ENCODE measurements at regions of chr19 and their contacts with region 1.

Region 1: GRCh38 chr19:37466798-37467607 is at the start of gene ZNF569:
- DNase-seq: peak; percentile 68 to 95 (median 92)
- ATAC-seq: peak; percentile 79
- H3K4me3 ChIP-seq: peak within 1 kb of the TSS; percentile 79
- H3K4me3 Mint-ChIP-seq: peak within 1 kb of the TSS; percentile 91 to 100 (median 95)
- H3K27ac ChIP-seq: peak within 1 kb of the TSS; percentile 96
- H3K27ac Mint-ChIP-seq: peak within 1 kb of the TSS; percentile 93 to 100 (median 98)
- H3K4me1 ChIP-seq: peaks cover 13 to 16% of the 10 kb centered on the region in 2 donors
- H3K4me1 Mint-ChIP-seq: peaks cover 26 to 54% (median 45%) of the 10 kb centered on the region in 7 donors
- H3K27me3 ChIP-seq: no peaks in the 10 kb centered on the region
- H3K27me3 Mint-ChIP-seq: no peaks in the 10 kb centered on the region
- total RNA-seq, gene ZNF569: 4.1 to 16.4 (median 8.5) TPM

Region 2: GRCh38 chr19:36214386-36215275 is 1252.4 kb before region 1 on chr19 and contains the starts of genes ZNF146 and ZNF565:
- CTCF ChIA-PET with region 1: no interaction called
- POLR2A ChIA-PET with region 1: interaction called, 6 read pairs
- intact Hi-C with region 1: loop called (anchors 1 kb)
- DNase-seq: peak; percentile 87 to 97 (median 96)
- ATAC-seq: peak; percentile 94
- H3K4me3 ChIP-seq: peak within 1 kb of the TSS; percentile 97
- H3K4me3 Mint-ChIP-seq: no peak within 1 kb of the TSS
- H3K27ac ChIP-seq: peak within 1 kb of the TSS; percentile 94
- H3K27ac Mint-ChIP-seq: peak within 1 kb of the TSS in 2 of 9 donors; percentile 38 to 41
- H3K4me1 ChIP-seq: peaks cover 14 to 19% of the 10 kb centered on the region in 2 donors
- H3K4me1 Mint-ChIP-seq: peaks cover 13 to 28% (median 25%) of the 10 kb centered on the region in 7 donors
- H3K27me3 ChIP-seq: no peaks in the 10 kb centered on the region
- H3K27me3 Mint-ChIP-seq: no peaks in the 10 kb centered on the region
- total RNA-seq, gene ZNF146: 27.7 to 77.4 (median 57.7) TPM
- total RNA-seq, gene ZNF565: 2.7 to 11.6 (median 7.8) TPM

Region 3: GRCh38 chr19:36772311-36773222 is 694.4 kb before region 1 on chr19 and contains the start of gene ZNF850:
- CTCF ChIA-PET with region 1: no interaction called
- POLR2A ChIA-PET with region 1: no interaction called
- intact Hi-C with region 1: loop called (anchors 1 kb)
- DNase-seq: peak; percentile 88 to 97 (median 94)
- ATAC-seq: peak; percentile 94
- H3K4me3 ChIP-seq: peak within 1 kb of the TSS; percentile 97
- H3K4me3 Mint-ChIP-seq: peak within 1 kb of the TSS; percentile 88 to 98 (median 96)
- H3K27ac ChIP-seq: peak within 1 kb of the TSS; percentile 87
- H3K27ac Mint-ChIP-seq: peak within 1 kb of the TSS; percentile 82 to 98 (median 92)
- H3K4me1 ChIP-seq: peaks cover 12 to 15% of the 10 kb centered on the region in 2 donors
- H3K4me1 Mint-ChIP-seq: peaks cover 21 to 26% (median 24%) of the 10 kb centered on the region in 7 donors
- H3K27me3 ChIP-seq: no peaks in the 10 kb centered on the region
- H3K27me3 Mint-ChIP-seq: no peaks in the 10 kb centered on the region
- total RNA-seq, gene ZNF850: 1.9 to 4.8 (median 4.3) TPM

Region 4: DNA sequence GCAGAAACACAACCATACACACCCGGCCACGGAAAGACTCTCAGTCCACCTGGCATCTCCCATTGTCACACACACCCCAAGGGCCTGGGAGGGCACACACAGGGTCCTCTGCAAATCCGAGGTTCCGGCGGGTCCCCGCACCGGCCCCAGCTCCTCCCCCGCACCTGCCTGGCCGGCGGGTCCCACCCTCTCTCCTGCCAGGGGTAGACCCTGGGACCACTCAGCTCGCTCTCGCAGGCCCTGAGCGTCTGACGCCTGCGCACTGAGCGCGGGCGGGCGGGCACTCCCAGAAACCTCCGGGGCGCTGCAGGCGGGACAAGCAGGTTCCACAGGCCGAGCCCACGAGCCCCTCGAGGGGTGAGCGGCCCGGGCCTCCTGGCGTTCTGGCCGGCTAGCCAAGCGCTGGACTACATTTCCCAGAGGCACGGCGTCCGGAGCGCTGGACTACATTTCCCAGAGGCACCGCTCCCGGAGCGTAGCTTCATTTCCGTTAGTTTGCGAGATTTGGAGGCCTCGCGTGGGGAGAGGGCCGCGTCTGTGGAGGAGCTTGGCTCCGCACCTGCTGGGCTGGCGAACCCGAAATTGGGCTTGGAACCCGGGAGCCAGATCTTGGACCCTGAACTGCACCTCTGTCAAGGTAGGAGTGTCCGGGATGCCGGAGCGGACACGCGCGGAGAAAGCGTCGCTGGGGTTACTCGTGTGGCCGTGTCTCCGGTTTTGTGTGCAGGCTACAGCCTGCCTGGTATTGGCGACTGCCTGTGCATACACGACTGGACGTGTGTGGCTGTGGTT is 388.9 kb before region 1 on chr19 and contains the start of gene ZNF420:
- CTCF ChIA-PET with region 1: no interaction called
- POLR2A ChIA-PET with region 1: no interaction called
- intact Hi-C with region 1: loop called (anchors 1 kb)
- DNase-seq: peak; percentile 64 to 89 (median 84)
- ATAC-seq: peak; percentile 98
- H3K4me3 ChIP-seq: peak within 1 kb of the TSS; percentile 92
- H3K4me3 Mint-ChIP-seq: peak within 1 kb of the TSS; percentile 90 to 100 (median 96)
- H3K27ac ChIP-seq: peak within 1 kb of the TSS; percentile 82
- H3K27ac Mint-ChIP-seq: peak within 1 kb of the TSS; percentile 70 to 99 (median 94)
- H3K4me1 ChIP-seq: peaks cover 11 to 19% of the 10 kb centered on the region in 2 donors
- H3K4me1 Mint-ChIP-seq: peaks cover 16 to 43% (median 34%) of the 10 kb centered on the region in 7 donors
- H3K27me3 ChIP-seq: no peaks in the 10 kb centered on the region
- H3K27me3 Mint-ChIP-seq: no peaks in the 10 kb centered on the region
- total RNA-seq, gene ZNF420: 10.8 to 34.9 (median 15.9) TPM

Region 5: DNA sequence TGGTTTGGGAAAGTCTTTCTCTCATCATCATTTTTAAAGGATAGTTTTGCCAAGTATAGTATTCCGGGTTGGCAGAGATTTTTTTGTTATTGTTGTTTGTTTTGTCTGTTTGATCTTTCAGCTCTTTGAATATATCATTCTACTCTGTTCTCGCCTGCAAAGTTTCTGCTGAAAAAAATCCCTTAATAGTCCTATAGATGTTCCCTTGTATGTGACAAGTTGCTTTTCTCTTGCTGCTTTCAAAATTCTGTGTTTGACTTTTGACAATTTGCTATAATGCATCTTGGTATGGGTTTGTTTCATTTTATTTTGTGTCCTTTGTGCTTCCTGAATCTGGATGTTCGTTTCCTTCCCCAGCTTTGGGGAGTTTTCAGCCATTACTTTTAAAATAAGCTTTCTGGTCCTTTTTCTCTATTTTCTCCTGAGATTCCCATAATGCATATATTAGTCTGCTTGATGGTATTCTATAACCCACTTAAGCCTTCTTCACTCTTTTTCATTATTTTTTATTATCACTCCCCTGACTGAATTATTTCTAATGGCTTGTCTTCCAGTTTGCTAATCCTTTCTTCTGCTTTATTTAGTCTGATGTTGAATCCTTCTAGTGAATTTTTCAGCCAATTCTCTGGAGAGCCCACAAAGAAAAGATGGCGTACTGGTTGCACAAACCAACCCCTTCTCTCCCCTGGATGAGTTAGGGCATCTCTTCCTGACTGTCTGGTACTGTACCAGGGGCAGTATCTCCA is 14.3 kb before region 1 on chr19:
- CTCF ChIA-PET with region 1: no interaction called
- POLR2A ChIA-PET with region 1: interaction called, 14 read pairs
- intact Hi-C with region 1: no loop called
- DNase-seq: no peak
- ATAC-seq: no peak
- H3K4me3 ChIP-seq: peak overlapping the region; percentile 12
- H3K4me3 Mint-ChIP-seq: no peak overlapping the region
- H3K27ac ChIP-seq: no peak overlapping the region
- H3K27ac Mint-ChIP-seq: no peak overlapping the region
- H3K4me1 ChIP-seq: no peaks in the 10 kb centered on the region
- H3K4me1 Mint-ChIP-seq: no peaks in the 10 kb centered on the region
- H3K27me3 ChIP-seq: no peaks in the 10 kb centered on the region
- H3K27me3 Mint-ChIP-seq: no peaks in the 10 kb centered on the region

Region 6: GRCh38 chr19:37719111-37719926 is 252.3 kb after region 1 on chr19 and contains the start of gene ZNF607:
- CTCF ChIA-PET with region 1: no interaction called
- POLR2A ChIA-PET with region 1: no interaction called
- intact Hi-C with region 1: loop called in 1 of 2 experiments (anchors 1 kb)
- DNase-seq: peak; percentile 43 to 80 (median 70)
- ATAC-seq: peak; percentile 87
- H3K4me3 ChIP-seq: peak within 1 kb of the TSS; percentile 63
- H3K4me3 Mint-ChIP-seq: peak within 1 kb of the TSS; percentile 80 to 95 (median 91)
- H3K27ac ChIP-seq: peak within 1 kb of the TSS; percentile 77
- H3K27ac Mint-ChIP-seq: peak within 1 kb of the TSS; percentile 80 to 98 (median 86)
- H3K4me1 ChIP-seq: peaks cover 6 to 7% of the 10 kb centered on the region in 2 donors
- H3K4me1 Mint-ChIP-seq: peaks cover 7 to 17% (median 10%) of the 10 kb centered on the region in 7 donors
- H3K27me3 ChIP-seq: no peaks in the 10 kb centered on the region
- H3K27me3 Mint-ChIP-seq: peaks cover 0 to 5% (median 0%) of the 10 kb centered on the region in 5 donors
- total RNA-seq, gene ZNF607: 3.5 to 10.8 (median 6.5) TPM

Measured in naive thymus-derived CD4-positive, alpha-beta T cell (primary cell).